ENCODE measurements at regions of chr14 and their contacts with region 1.

Region 1: DNA sequence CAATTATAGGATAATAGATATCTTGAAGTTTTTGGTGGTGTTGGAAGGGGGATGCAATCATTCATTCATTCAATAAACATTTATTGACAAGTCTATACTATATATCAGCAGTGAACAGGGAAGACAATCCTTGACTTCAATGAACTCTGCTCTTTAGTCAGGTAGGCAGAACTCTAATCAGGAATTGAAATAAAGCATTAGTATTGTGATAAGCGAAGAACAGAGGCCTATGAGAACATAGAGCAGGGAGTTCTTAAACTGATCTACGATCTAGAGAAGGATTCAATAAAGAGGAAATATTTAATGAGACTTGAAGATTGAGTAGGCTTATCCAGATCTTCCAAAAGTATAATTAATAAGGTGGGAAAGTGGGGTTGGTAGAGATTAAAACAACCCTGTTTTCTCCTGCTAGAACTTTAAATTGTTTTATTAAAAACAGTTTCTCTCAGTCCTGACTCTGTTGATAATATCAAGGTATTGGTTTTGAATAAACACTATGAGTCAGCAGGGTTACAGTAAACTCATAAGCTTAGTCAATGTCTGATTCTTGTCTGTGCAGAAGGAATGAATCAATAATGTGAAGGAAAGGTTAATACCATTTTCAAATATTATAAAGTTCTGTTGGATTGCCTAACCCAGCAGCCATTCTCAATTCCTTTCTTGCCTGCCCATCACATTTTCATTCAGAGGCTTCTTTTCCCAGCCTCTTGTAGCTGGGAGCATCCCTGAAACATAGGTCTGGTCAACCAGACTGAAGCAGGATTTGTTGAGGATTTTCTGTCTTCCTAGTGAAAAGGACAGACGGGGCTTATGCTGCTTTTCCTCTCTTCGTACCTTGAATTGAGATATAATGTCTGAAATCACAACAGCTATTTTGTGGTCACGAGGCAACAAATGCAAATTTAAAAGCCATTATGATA is 38.9 kb upstream of the KTN1 start:
- DNase-seq: no peak
- H3K4me3 ChIP-seq: no peak overlapping the region
- CTCF ChIP-seq: no peak

Region 2: DNA sequence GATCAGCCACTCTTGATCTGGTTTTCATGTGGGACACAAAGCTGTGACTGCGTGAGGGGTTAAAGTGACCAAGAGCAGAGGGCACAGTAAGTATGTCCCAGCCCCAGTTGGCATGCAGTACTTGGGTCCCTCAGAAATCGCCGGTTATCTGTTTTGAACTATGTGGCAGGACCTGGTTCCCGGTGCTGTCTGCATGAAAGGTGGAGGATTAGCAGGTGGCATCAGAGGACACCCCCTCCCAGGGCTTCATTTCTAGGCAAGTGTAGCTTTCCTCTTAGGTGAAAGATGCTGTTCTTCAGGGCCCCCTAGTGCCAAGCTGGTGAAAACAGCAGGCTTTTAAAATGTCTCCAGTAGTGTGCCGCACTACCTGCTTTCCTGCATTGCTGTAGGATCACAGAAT is 186.6 kb before region 1 on chr14:
- CTCF ChIA-PET with region 1: no interaction called
- POLR2A ChIA-PET with region 1: no interaction called
- DNase-seq: no peak
- H3K4me3 ChIP-seq: no peak overlapping the region
- CTCF ChIP-seq: peak; percentile 49

Region 3: DNA sequence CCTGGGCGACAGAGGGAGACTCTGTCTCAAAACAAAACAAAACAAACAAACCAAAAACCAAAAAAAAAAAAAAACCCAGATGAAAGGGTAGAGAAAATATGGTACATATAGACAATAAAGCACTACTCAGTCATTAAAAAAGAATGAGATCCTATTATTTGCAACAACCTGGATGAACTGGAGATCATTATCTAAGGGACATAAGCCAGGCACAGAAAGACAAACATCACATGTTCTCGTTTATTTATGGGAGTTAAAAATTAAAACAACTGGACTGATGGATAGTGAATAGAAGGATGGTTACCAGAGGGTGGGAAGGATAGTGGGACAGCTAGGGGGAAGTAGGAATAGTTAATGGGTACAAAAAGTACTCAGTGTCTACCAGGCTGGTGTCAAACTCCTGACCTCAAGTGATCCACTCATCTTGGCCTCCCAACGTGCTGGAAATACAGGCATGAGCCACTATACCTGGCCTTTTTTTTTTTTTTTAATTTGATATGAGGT is 17.8 kb before region 1 on chr14:
- CTCF ChIA-PET with region 1: no interaction called
- POLR2A ChIA-PET with region 1: no interaction called
- DNase-seq: no peak
- H3K4me3 ChIP-seq: no peak overlapping the region
- CTCF ChIP-seq: no peak

Region 4: GRCh38 chr14:55556929-55557623 is 16.0 kb after region 1 on chr14:
- CTCF ChIA-PET with region 1: interaction called, 13 read pairs
- POLR2A ChIA-PET with region 1: no interaction called
- DNase-seq: peak; percentile 85
- H3K4me3 ChIP-seq: no peak overlapping the region
- CTCF ChIP-seq: no peak